GM12878 (cell line): ENCODE measurements at regions of chr3 and their contacts with region 1.

Region 1: DNA sequence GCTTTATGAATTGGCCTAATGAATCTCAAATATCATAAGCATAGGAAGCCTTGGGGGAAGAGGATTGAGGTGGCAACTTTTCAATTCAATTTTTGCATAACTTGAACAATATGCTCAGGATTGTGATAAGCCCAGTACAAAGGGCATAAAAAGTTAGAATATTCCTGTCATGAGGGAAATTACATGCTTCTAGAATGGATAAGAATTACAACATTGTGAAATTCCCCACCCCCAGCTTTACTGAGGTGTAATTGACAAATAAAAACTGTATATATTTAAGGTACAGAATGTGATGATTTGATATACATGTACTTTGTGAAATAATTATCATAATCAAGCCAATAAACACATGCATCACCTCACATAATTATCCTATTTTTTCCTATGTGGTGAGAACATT is 132.6 kb upstream of the TNIK start:
- DNase-seq: no peak
- ATAC-seq: no peak
- H3K4me3 ChIP-seq: no peak overlapping the region
- H3K27ac ChIP-seq: no peak overlapping the region
- H3K4me1 ChIP-seq: no peaks in the 10 kb centered on the region
- H3K27me3 ChIP-seq: no peaks in the 10 kb centered on the region
- CTCF ChIP-seq: no peak
- EP300 ChIP-seq: no peak
- POLR2A ChIP-seq: no peak
- RAD21 ChIP-seq: no peak

Region 2: DNA sequence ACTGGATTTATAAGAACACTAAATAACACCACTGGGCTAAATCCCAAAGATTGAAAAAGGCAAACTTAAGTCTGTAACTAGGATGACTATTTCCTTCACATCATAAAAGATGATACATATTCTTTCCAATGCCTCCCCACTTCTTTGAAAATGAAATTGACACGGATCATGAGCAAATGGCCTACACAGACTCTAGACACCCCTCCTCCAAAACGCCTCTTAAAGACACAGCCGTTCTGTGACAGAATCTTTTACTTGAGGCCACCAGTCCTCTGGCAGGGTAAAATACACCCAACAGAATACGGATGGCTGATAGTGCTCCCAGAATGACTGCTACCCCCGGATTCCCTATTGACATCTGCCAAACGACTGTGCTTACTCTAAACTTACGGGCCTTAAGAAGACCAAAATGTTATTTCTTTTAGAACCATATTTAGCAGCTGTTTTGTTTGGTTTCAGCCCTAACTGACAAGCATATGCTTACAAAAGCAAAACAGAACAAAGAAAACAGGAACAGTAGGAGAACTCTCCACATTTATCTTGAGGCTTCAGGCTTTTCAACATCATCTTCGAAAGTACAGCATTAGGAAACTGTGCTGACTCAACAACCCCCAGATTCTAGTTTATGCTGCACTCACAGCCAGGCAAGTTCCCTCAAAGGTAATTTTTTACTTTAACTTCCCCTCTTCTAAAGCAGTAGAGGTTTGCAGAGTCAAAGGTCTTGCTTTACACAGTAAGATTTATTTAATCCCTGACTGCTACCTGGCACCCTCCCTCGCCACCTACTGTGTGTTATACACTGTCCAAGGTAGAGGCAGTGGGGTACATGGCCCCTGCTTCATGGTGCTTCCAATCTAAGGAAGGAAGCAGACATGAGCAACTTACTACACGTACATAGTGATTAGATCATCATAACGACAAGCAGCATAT is 216.9 kb before region 1 on chr3:
- CTCF ChIA-PET with region 1: no interaction called
- POLR2A ChIA-PET with region 1: no interaction called
- RAD21 ChIA-PET with region 1: no interaction called
- SMC1A ChIA-PET with region 1: no interaction called
- in situ Hi-C with region 1: no loop called
- intact Hi-C with region 1: no loop called
- DNase-seq: no peak
- ATAC-seq: peak; percentile 69
- H3K4me3 ChIP-seq: no peak overlapping the region
- H3K27ac ChIP-seq: peak overlapping the region; percentile 22; the same call in 1 of the 2 replicates
- H3K4me1 ChIP-seq: peaks cover 37% of the 10 kb centered on the region
- H3K27me3 ChIP-seq: no peaks in the 10 kb centered on the region
- CTCF ChIP-seq: no peak
- EP300 ChIP-seq: no peak
- POLR2A ChIP-seq: no peak
- RAD21 ChIP-seq: no peak

Region 3: GRCh38 chr3:171614318-171614921 is 21.6 kb after region 1 on chr3:
- CTCF ChIA-PET with region 1: interaction called, 13 read pairs
- POLR2A ChIA-PET with region 1: no interaction called
- RAD21 ChIA-PET with region 1: no interaction called
- SMC1A ChIA-PET with region 1: interaction called, 5 read pairs
- in situ Hi-C with region 1: no loop called
- intact Hi-C with region 1: no loop called
- DNase-seq: no peak
- ATAC-seq: peak; percentile 83
- H3K4me3 ChIP-seq: no peak overlapping the region
- H3K27ac ChIP-seq: no peak overlapping the region
- H3K4me1 ChIP-seq: no peaks in the 10 kb centered on the region
- H3K27me3 ChIP-seq: no peaks in the 10 kb centered on the region; a peak in 1 of 4 replicates
- CTCF ChIP-seq: peak; percentile 64 to 83 (median 67)
- EP300 ChIP-seq: no peak
- POLR2A ChIP-seq: no peak
- RAD21 ChIP-seq: peak; percentile 63